Mammary epithelial cell (primary cell): ENCODE measurements at regions of chr1 and their contacts with region 1.

Region 1: DNA sequence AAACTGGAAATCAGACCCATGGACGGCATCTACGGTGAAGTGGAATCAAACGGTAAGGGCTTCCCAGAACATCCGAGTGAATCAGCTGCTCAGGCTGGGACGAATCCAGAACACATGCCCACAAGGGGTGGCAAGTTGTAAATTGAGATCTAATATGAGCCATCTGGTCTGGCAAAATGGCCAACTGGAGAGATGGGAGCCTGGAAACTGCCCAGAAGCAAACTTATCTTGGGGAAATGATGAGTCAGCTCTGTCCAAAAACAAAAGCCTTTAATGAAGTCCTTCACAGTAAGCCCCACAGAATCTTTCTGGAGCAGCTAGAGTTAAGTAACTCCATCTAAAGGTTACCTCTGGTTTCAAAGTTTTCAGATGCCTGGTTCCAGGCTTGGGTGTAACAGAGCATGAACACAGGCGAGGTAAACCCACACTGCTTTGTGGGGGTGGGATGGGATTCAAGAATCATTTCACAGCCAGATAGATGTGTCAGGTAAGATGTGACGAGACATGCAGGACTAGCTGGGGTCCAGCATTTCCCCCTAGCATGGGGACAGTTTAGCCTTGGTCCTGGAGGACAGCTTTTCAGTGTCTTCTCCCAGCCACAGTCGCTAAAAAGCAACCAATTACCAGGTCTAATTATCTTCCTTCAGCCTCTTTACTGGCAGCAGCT is 10.5 kb upstream of the SRP9 start:
- DNase-seq: peak; percentile 82
- H3K4me3 ChIP-seq: no peak overlapping the region
- H3K27ac ChIP-seq: peak overlapping the region; percentile 31
- H3K4me1 ChIP-seq: peaks cover 36% of the 10 kb centered on the region
- H3K27me3 ChIP-seq: no peaks in the 10 kb centered on the region
- CTCF ChIP-seq: no peak

Region 2: GRCh38 chr1:225480825-225481434 is 286.2 kb before region 1 on chr1:
- CTCF ChIA-PET with region 1: interaction called, 9 read pairs
- dilution Hi-C with region 1: loop called (anchors 5 kb)
- in situ Hi-C with region 1: loop called in 1 of 2 experiments (anchors 10 kb)
- intact Hi-C with region 1: loop called (anchors 1 kb)
- DNase-seq: peak; percentile 28
- H3K4me3 ChIP-seq: no peak overlapping the region
- H3K27ac ChIP-seq: no peak overlapping the region
- H3K4me1 ChIP-seq: no peaks in the 10 kb centered on the region
- H3K27me3 ChIP-seq: no peaks in the 10 kb centered on the region
- CTCF ChIP-seq: peak; percentile 93 to 95

Region 3: DNA sequence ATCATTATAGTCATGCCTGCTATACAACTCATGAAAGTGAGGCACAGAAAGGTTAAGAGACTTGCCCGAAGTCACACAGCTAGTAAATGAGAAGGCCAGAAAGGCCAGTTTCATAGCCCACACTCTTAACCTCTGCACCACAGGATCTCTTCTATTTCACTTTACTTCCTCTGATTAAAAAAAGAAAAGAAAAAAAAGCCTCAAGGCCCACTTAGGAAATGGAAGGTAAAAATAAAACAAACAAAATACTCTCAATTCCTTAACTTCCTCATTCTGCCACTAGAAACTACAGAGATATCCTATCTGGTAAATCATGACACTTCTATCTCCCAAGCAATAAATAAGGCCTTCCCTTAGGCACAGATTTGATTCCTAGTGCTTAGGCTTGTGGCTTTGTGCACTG is 106.6 kb before region 1 on chr1:
- CTCF ChIA-PET with region 1: no interaction called
- dilution Hi-C with region 1: loop called (anchors 5 kb)
- in situ Hi-C with region 1: loop called in 1 of 2 experiments (anchors 25 kb)
- intact Hi-C with region 1: no loop called
- DNase-seq: no peak
- H3K4me3 ChIP-seq: no peak overlapping the region
- H3K27ac ChIP-seq: no peak overlapping the region
- H3K4me1 ChIP-seq: peaks cover 24% of the 10 kb centered on the region
- H3K27me3 ChIP-seq: no peaks in the 10 kb centered on the region
- CTCF ChIP-seq: no peak

Region 4: GRCh38 chr1:225684741-225685140 is 82.4 kb before region 1 on chr1:
- CTCF ChIA-PET with region 1: no interaction called
- dilution Hi-C with region 1: loop called (anchors 5 kb)
- in situ Hi-C with region 1: no loop called
- intact Hi-C with region 1: no loop called
- DNase-seq: no peak
- H3K4me3 ChIP-seq: no peak overlapping the region
- H3K27ac ChIP-seq: no peak overlapping the region
- H3K4me1 ChIP-seq: no peaks in the 10 kb centered on the region
- H3K27me3 ChIP-seq: peaks cover 2% of the 10 kb centered on the region
- CTCF ChIP-seq: no peak

Region 5: DNA sequence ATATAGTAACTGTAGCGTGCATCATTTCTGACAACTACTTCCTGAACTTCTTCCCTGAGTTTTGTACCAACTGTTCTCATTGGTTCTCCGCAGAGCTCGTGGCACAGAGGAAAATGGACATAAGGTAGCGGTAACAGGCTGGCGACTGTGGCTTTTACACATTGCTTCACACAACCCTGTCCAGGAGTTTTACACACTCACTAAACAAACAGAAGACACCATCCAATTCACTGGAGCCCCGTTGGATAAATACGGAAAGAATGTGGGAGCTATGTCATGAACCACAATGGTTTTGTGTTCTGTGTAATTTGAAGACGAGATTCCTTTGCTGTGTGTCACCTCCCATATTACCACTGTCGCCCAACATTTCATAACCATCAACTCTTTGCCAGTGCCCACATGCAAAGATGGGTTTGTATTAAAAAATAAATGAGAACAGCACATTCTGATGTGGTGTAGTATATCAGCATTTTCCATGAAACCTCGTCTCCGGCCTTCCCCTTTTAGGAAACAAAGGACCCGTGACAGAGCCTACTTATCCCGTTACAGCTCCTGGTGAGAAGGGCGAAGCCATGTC is 66.8 kb before region 1 on chr1:
- CTCF ChIA-PET with region 1: no interaction called
- dilution Hi-C with region 1: no loop called
- in situ Hi-C with region 1: no loop called
- intact Hi-C with region 1: loop called (anchors 1 kb)
- DNase-seq: peak; percentile 100
- H3K4me3 ChIP-seq: no peak overlapping the region
- H3K27ac ChIP-seq: peak overlapping the region; percentile 79
- H3K4me1 ChIP-seq: peaks cover 19% of the 10 kb centered on the region
- H3K27me3 ChIP-seq: no peaks in the 10 kb centered on the region
- CTCF ChIP-seq: no peak

Region 6: DNA sequence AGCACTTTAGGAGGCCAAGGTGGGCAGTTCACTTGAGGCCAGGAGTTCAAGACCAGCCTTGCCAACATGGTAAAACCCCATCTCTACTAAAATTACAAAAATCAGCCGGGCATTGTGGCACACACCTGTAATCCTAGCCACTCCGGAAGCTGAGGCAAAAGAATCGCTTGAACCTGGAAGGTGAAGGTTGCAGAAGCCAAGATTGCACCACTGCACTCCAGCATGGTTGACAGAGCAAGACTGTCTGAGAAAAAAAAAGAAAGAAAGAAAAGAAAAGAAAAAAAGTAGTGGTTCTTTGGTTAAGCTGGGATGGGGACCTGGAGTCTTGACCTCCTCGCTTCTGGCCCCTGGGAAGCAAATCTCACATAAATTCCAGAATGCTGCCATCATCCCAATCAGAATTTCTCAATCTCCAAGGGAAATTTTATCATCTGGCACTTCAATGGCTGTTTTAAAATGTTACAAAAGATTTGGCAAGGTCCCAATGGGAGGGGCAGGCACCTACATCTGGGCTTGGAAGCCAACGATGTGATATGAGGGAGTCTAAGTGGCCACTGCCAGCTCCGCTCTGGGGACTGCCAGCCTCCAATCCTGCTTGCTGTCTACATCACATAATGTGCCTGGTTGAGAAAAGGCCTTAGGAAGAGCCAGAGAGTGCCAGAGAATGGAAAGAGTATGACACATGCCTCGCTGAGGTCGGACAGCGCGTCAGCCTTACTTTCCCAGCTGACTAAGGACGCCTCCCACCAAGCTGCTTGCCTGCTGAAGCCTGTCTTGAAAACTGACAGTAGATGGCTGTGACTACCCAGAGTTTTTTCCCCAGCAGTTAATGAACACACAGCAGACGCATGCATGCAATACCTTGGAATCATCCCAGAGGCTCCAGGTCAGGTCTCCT is 31.6 kb before region 1 on chr1:
- CTCF ChIA-PET with region 1: no interaction called
- dilution Hi-C with region 1: no loop called
- in situ Hi-C with region 1: no loop called
- intact Hi-C with region 1: loop called (anchors 1 kb)
- DNase-seq: peak; percentile 97
- H3K4me3 ChIP-seq: peak overlapping the region in 1 of 3 experiments; percentile 31
- H3K27ac ChIP-seq: peak overlapping the region; percentile 72
- H3K4me1 ChIP-seq: peaks cover 29% of the 10 kb centered on the region
- H3K27me3 ChIP-seq: no peaks in the 10 kb centered on the region
- CTCF ChIP-seq: peak; percentile 9 to 31